ENCODE measurements at regions of chr6 and their contacts with region 1.

Region 1: GRCh38 chr6:138817822-138818308 is 22.0 kb downstream of the ECT2L start:
- DNase-seq: peak; percentile 67 to 84 (median 82)
- ATAC-seq: peak; percentile 93
- H3K4me3 ChIP-seq: no peak overlapping the region
- H3K27ac ChIP-seq: peak overlapping the region in 3 of 4 donors; percentile 28 to 68 (median 53)
- H3K4me1 ChIP-seq: peaks cover 12% of the 10 kb centered on the region
- H3K27me3 ChIP-seq: no peaks in the 10 kb centered on the region
- CTCF ChIP-seq: no peak
- POLR2A ChIP-seq: no peak

Region 2: DNA sequence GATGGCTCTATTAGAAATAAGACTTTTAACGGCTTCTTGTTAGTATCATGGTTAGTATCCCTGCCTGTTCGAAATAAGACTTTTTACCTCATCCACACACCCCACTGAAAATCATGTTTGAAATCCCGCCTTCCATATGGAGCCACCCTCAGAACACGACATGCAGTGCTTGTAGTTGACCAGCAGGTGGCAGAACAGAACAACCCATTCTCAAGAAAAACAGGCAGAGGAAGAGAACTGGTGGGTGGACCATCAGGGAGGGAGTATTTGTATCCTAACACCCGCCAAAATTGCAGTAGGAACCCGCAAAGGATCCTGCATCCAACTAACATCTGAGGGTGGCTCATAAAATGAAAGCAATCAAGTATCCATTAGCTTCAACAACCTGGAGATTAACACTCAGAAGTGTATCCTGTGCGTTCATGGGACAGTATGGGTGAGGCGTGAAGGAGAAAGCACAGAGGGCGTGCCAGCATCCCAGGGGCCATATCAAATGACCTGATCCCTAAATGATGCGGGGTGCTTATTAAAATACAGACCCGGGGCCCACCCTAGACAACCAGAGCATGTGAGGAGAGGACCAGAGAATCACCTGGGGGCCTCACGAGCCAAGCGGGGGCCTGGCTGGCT is 228.9 kb before region 1 on chr6:
- intact Hi-C with region 1: no loop called
- DNase-seq: peak; percentile 52 to 66 (median 62)
- ATAC-seq: peak; percentile 62
- H3K4me3 ChIP-seq: no peak overlapping the region
- H3K27ac ChIP-seq: no peak overlapping the region
- H3K4me1 ChIP-seq: peaks cover 10% of the 10 kb centered on the region
- H3K27me3 ChIP-seq: no peaks in the 10 kb centered on the region
- CTCF ChIP-seq: peak; percentile 59 to 91 (median 88)
- POLR2A ChIP-seq: no peak

Region 3: DNA sequence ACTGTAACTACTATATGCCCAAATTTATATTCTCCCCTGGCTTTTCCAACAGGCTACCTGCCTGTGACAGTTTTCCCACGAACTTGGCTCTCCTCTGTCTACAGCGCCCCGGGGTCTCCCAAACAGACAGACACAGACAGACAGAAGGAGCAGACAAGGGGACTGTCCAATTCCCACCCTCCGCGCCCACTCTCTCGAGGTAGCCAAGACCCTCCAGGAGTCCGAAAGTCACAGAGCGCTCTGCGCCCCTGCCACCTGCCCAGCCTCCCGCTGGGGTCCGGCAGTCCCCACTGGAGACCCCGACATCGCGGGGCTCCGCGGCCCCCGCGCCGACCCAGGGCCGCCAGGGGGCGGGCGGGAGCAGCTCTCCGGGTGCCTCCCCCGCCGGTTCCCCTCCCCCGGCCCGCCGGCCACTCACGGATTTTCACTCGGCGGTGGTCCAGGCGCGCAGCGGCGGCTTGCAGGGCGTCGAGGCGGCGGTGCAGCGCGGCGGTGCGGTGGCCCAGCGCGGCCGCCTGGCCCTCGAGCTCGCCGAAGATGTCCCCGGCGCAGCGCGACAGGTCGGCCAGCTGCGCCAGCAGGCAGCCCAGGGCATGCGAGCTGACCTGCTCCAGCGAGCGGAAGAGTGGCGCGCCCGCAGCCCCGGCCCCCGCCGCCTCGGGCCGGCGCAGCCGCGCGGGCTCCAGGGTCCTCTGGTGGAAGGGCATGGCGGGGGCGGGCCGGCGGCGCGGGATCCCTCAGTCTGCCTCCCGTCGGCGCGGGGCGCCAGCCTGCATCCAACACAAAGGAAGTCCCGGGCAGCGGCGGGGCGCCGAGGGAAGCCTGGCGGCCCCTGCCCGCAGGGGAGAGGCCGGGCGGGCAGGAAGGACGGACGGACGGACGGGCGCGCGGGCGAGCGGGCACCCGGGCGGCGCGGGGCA is 125.5 kb before region 1 on chr6:
- intact Hi-C with region 1: no loop called
- DNase-seq: peak; percentile 71 to 83 (median 75)
- ATAC-seq: peak; percentile 78
- H3K4me3 ChIP-seq: peak overlapping the region; percentile 52 to 59
- H3K27ac ChIP-seq: peak overlapping the region; percentile 82 to 91 (median 89)
- H3K4me1 ChIP-seq: peaks cover 16% of the 10 kb centered on the region
- H3K27me3 ChIP-seq: no peaks in the 10 kb centered on the region
- CTCF ChIP-seq: peak; percentile 62 to 93 (median 80)
- POLR2A ChIP-seq: no peak

Region 4: DNA sequence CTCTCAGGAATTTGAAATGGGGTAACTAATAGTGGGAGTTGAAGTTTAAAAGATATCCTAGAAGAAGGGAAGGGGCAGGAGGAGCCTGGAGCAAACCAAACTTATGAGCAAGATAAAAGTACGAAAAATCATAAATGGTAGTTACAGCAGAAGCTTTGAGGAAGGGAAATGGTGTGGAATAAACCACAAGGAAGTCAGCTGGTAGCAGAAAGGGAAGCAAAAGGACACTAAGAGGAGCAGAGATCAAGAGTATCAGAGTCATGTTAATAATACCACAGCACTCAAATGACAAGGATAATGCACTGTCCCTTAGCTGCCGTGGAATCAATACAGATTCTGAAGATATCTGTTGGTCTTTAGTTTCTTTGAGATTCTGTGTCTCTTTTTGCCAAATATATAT is 89.2 kb before region 1 on chr6:
- intact Hi-C with region 1: no loop called
- DNase-seq: no peak
- ATAC-seq: no peak
- H3K4me3 ChIP-seq: no peak overlapping the region
- H3K27ac ChIP-seq: no peak overlapping the region
- H3K4me1 ChIP-seq: peaks cover 4% of the 10 kb centered on the region
- H3K27me3 ChIP-seq: no peaks in the 10 kb centered on the region
- CTCF ChIP-seq: no peak
- POLR2A ChIP-seq: no peak

Region 5: GRCh38 chr6:138987640-138988468 is 170.0 kb after region 1 on chr6 and contains the start of gene REPS1:
- intact Hi-C with region 1: loop called (anchors 10 kb)
- DNase-seq: peak; percentile 91 to 94 (median 92)
- ATAC-seq: peak; percentile 98
- H3K4me3 ChIP-seq: peak within 1 kb of the TSS; percentile 62 to 89
- H3K27ac ChIP-seq: peak within 1 kb of the TSS; percentile 75 to 92 (median 84)
- H3K4me1 ChIP-seq: peaks cover 38% of the 10 kb centered on the region
- H3K27me3 ChIP-seq: no peaks in the 10 kb centered on the region
- CTCF ChIP-seq: peak; percentile 88 to 100 (median 96)
- POLR2A ChIP-seq: peak; percentile 82 to 92 (median 89)
- total RNA-seq, gene REPS1: 19.5 to 29.0 TPM

Region 6: GRCh38 chr6:139364302-139364981 is 546.6 kb after region 1 on chr6:
- intact Hi-C with region 1: loop called (anchors 5 kb)
- DNase-seq: no peak
- ATAC-seq: peak; percentile 67
- H3K4me3 ChIP-seq: no peak overlapping the region
- H3K27ac ChIP-seq: no peak overlapping the region
- H3K4me1 ChIP-seq: no peaks in the 10 kb centered on the region
- H3K27me3 ChIP-seq: no peaks in the 10 kb centered on the region
- CTCF ChIP-seq: peak in 6 of 7 experiments; percentile 60 to 81 (median 80)
- POLR2A ChIP-seq: no peak